ENCODE measurements at regions of chr15 and their contacts with region 1.

Region 1: DNA sequence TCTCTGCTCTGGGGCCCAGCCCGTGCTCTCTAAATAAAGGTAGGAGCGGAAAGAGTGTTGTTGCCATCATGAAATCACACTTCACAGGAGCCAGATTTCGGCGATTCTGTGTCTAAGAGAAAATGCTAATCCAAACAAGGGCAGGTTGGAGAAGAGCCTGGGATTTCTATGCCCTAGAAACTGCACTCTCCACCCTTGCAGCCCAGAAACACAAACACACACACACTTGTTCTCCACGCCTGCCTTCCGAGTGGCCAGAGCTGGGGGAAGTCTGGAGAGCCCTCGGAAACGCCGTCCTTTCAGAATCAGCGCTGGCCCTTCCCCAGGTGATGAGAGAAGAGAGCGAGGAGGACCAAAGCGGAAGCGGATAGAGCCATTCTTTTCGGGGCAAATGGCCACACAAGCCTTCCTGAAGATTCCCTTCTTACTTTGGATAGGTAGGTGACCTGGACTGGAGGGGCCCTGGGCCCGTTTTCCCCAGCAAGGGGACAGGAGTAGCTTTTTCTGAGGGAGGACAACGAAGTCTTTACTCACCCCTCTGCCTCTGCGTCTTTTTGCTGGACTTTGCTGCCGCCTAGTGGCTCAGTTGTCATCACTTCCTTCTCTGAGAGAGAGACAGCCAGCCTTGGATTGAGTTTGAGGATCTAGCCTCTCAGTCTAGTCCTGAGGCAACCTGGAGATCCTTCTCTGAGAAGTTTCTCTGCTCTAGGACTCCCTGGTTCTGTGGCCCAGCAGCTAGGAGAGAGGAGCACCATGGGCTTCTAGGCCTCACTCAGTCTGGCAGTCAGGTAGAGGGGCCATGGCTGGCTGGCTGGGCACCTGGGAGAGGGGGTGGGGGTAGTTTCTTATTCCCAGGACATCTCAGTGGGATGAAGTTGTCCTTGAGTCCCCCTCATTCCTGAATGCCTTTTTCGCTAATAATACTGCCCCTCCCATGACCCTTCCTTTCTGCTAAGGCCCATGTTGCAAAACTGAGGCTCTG is 37.7 kb downstream of the SENP8 start:
- DNase-seq: peak; percentile 92
- H3K4me3 Mint-ChIP-seq: peak overlapping the region; percentile 60
- H3K27ac Mint-ChIP-seq: no peak overlapping the region
- H3K4me1 Mint-ChIP-seq: peaks cover 4% of the 10 kb centered on the region
- H3K27me3 Mint-ChIP-seq: peaks cover 2% of the 10 kb centered on the region

Region 2: GRCh38 chr15:71448688-71449114 is 707.2 kb before region 1 on chr15:
- CTCF ChIA-PET with region 1: no interaction called
- intact Hi-C with region 1: loop called (anchors 5 kb)
- DNase-seq: peak; percentile 8
- H3K4me3 Mint-ChIP-seq: no peak overlapping the region
- H3K27ac Mint-ChIP-seq: no peak overlapping the region
- H3K4me1 Mint-ChIP-seq: no peaks in the 10 kb centered on the region
- H3K27me3 Mint-ChIP-seq: peaks cover 12% of the 10 kb centered on the region

Region 3: DNA sequence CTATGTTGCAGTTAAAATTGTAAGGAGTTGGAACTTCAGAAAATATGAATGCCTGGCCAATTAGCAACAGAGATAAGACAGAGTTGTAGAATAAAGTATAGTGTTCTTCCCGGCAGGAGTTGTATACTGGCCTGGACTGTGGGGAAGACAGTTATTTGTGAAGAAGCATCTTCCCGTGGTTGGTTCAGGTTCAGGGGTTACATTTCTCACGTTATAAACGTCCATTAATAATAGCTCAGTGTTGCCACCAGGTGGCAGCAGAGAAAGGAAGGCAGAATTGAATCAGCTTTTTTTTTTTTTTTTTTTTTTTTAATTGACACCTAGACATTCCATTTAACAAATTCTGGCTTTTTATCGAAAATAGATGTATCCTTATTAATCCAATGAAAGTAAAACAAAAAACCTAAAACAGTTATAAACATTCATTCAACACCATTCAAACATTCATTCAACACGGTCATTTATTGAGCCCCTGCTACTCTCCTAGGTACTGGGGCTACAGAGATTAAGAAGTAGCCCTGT is 412.0 kb before region 1 on chr15:
- CTCF ChIA-PET with region 1: interaction called, 19 read pairs
- intact Hi-C with region 1: loop called (anchors 1 kb)
- DNase-seq: peak; percentile 74
- H3K4me3 Mint-ChIP-seq: no peak overlapping the region
- H3K27ac Mint-ChIP-seq: no peak overlapping the region
- H3K4me1 Mint-ChIP-seq: no peaks in the 10 kb centered on the region
- H3K27me3 Mint-ChIP-seq: peaks cover 2% of the 10 kb centered on the region

Region 4: GRCh38 chr15:71780115-71780976 is 375.6 kb before region 1 on chr15:
- CTCF ChIA-PET with region 1: interaction called, 29 read pairs
- intact Hi-C with region 1: loop called (anchors 1 kb)
- DNase-seq: peak; percentile 25
- H3K4me3 Mint-ChIP-seq: no peak overlapping the region
- H3K27ac Mint-ChIP-seq: no peak overlapping the region
- H3K4me1 Mint-ChIP-seq: no peaks in the 10 kb centered on the region
- H3K27me3 Mint-ChIP-seq: peaks cover 10% of the 10 kb centered on the region

Region 5: GRCh38 chr15:71800835-71801745 is 354.8 kb before region 1 on chr15:
- CTCF ChIA-PET with region 1: interaction called, 25 read pairs
- intact Hi-C with region 1: loop called (anchors 1 kb)
- DNase-seq: peak; percentile 35
- H3K4me3 Mint-ChIP-seq: no peak overlapping the region
- H3K27ac Mint-ChIP-seq: no peak overlapping the region
- H3K4me1 Mint-ChIP-seq: no peaks in the 10 kb centered on the region
- H3K27me3 Mint-ChIP-seq: peaks cover 15% of the 10 kb centered on the region

Region 6: GRCh38 chr15:71883447-71883846 is 272.5 kb before region 1 on chr15:
- CTCF ChIA-PET with region 1: no interaction called
- intact Hi-C with region 1: no loop called
- DNase-seq: no peak
- H3K4me3 Mint-ChIP-seq: no peak overlapping the region
- H3K27ac Mint-ChIP-seq: no peak overlapping the region
- H3K4me1 Mint-ChIP-seq: no peaks in the 10 kb centered on the region
- H3K27me3 Mint-ChIP-seq: no peaks in the 10 kb centered on the region

Region 7: GRCh38 chr15:72845981-72846383 is 690.1 kb after region 1 on chr15:
- CTCF ChIA-PET with region 1: no interaction called
- intact Hi-C with region 1: no loop called
- DNase-seq: no peak
- H3K4me3 Mint-ChIP-seq: no peak overlapping the region
- H3K27ac Mint-ChIP-seq: no peak overlapping the region
- H3K4me1 Mint-ChIP-seq: peaks cover 3% of the 10 kb centered on the region
- H3K27me3 Mint-ChIP-seq: peaks cover 23% of the 10 kb centered on the region

Measured in activated naive CD4-positive, alpha-beta T cell treated with anti-CD3 and anti-CD28 coated beads for 36 hours (primary cell).